ENCODE measurements at regions of chr9 and their contacts with region 1.

Region 1: GRCh38 chr9:127734747-127735529 is at the start of gene TOR2A:
- DNase-seq: peak; percentile 98 to 100 (median 99)
- ATAC-seq: peak; percentile 94
- H3K4me3 ChIP-seq: peak within 1 kb of the TSS; percentile 67 to 79
- H3K4me3 Mint-ChIP-seq: peak within 1 kb of the TSS; percentile 91
- H3K27ac ChIP-seq: peak within 1 kb of the TSS; percentile 59 to 87
- H3K27ac Mint-ChIP-seq: peak within 1 kb of the TSS; percentile 86
- H3K4me1 ChIP-seq: peaks cover 18% of the 10 kb centered on the region
- H3K4me1 Mint-ChIP-seq: peaks cover 7% of the 10 kb centered on the region
- H3K27me3 ChIP-seq: no peaks in the 10 kb centered on the region
- H3K27me3 Mint-ChIP-seq: no peaks in the 10 kb centered on the region
- CTCF ChIP-seq: peak; percentile 80
- total RNA-seq, gene TOR2A: 4.7 to 5.3 TPM

Region 2: DNA sequence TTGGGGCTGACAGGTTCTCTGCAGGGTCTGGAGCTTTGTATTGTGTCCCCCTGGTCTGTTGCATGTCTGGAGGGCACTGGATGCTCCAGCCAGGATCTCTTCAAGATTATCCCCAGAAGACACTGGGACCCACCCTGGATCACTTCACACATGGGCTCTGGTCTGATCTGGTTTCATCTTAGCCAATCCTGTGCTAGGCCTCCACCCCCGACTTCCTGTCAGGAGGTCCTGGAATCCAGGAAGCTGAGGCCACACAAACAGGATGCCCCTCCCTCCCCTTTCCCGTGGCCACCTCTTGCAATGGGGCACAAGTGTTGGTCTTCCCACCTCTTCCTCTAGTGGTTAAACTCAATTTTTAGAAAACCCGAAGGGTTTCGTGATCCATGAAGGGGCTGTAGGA is 1650.9 kb before region 1 on chr9:
- CTCF ChIA-PET with region 1: no interaction called
- POLR2A ChIA-PET with region 1: no interaction called
- intact Hi-C with region 1: no loop called
- DNase-seq: no peak
- ATAC-seq: no peak
- H3K4me3 ChIP-seq: no peak overlapping the region
- H3K4me3 Mint-ChIP-seq: no peak overlapping the region
- H3K27ac ChIP-seq: no peak overlapping the region
- H3K27ac Mint-ChIP-seq: no peak overlapping the region
- H3K4me1 ChIP-seq: peaks cover 6% of the 10 kb centered on the region
- H3K4me1 Mint-ChIP-seq: peaks cover 13% of the 10 kb centered on the region
- H3K27me3 ChIP-seq: peaks cover 0 to 2% of the 10 kb centered on the region in 2 experiments
- H3K27me3 Mint-ChIP-seq: peaks cover 14% of the 10 kb centered on the region
- CTCF ChIP-seq: no peak

Region 3: DNA sequence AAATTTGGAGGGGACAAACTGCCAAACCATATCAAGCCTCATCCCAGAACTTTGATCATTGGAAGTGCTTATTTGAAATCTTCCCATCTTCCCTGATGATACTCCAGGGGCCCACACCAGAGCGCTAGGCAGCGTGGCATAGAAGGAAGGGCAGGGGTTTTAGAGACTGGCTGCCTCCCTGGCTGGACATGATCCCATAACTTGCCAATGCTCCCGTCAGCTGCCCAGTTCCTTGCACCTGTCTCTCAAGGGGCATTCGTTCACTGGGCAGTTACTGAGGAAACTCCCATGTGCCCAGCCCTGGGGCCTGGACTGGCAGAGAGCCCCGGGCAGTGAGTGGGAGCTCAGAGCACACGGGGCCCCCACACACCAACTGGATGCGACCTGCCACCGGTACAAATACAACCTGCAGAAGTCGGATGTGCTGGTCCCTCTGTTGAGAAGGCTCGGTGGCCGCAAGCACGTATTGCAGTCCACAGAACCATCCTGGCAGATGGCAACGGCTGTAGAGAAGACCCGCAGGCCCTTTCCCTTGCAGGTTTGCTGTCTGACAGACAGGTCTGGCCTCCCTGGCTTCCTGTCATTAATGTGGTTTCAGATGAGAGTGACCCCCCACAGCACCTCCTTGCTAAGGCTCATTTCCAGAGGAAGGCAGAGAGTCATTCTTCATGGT is 1285.9 kb before region 1 on chr9:
- CTCF ChIA-PET with region 1: no interaction called
- POLR2A ChIA-PET with region 1: no interaction called
- intact Hi-C with region 1: no loop called
- DNase-seq: no peak
- ATAC-seq: no peak
- H3K4me3 ChIP-seq: no peak overlapping the region
- H3K4me3 Mint-ChIP-seq: no peak overlapping the region
- H3K27ac ChIP-seq: no peak overlapping the region
- H3K27ac Mint-ChIP-seq: no peak overlapping the region
- H3K4me1 ChIP-seq: peaks cover 6% of the 10 kb centered on the region
- H3K4me1 Mint-ChIP-seq: peaks cover 31% of the 10 kb centered on the region
- H3K27me3 ChIP-seq: no peaks in the 10 kb centered on the region
- H3K27me3 Mint-ChIP-seq: no peaks in the 10 kb centered on the region
- CTCF ChIP-seq: no peak

Region 4: DNA sequence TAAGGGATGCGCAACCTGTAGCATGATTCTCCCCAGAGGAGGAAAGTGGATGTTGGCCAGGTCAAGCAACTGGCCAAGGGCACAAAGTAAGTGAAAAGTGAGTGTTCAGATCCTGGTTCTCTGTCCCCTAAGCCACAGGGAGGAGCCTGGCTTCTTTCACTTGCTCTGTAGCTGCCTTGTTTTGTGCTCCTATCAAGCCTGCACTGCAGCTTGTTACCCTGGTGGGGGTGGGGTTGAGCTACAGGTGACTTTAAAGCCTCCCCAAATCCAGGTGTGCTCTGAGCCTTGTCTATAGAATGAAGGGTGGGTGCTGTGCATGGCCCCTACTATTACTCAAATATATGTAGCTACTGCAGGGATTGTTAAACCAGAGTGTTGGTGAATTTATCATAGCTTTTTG is 787.4 kb before region 1 on chr9:
- CTCF ChIA-PET with region 1: no interaction called
- POLR2A ChIA-PET with region 1: no interaction called
- intact Hi-C with region 1: loop called in 1 of 2 experiments (anchors 10 kb)
- DNase-seq: peak in 2 of 9 experiments; percentile 17 to 36
- ATAC-seq: peak; percentile 26
- H3K4me3 ChIP-seq: no peak overlapping the region
- H3K4me3 Mint-ChIP-seq: no peak overlapping the region
- H3K27ac ChIP-seq: no peak overlapping the region
- H3K27ac Mint-ChIP-seq: no peak overlapping the region
- H3K4me1 ChIP-seq: no peaks in the 10 kb centered on the region
- H3K4me1 Mint-ChIP-seq: no peaks in the 10 kb centered on the region
- H3K27me3 ChIP-seq: no peaks in the 10 kb centered on the region
- H3K27me3 Mint-ChIP-seq: peaks cover 7% of the 10 kb centered on the region
- CTCF ChIP-seq: no peak

Region 5: GRCh38 chr9:127122176-127123063 is 612.5 kb before region 1 on chr9 and contains the start of gene ANGPTL2:
- CTCF ChIA-PET with region 1: no interaction called
- POLR2A ChIA-PET with region 1: no interaction called
- intact Hi-C with region 1: no loop called
- DNase-seq: peak in 1 of 9 experiments; percentile 14
- ATAC-seq: peak; percentile 34
- H3K4me3 ChIP-seq: no peak within 1 kb of the TSS
- H3K4me3 Mint-ChIP-seq: no peak within 1 kb of the TSS
- H3K27ac ChIP-seq: no peak within 1 kb of the TSS
- H3K27ac Mint-ChIP-seq: peak within 1 kb of the TSS; percentile 32
- H3K4me1 ChIP-seq: peaks cover 10% of the 10 kb centered on the region
- H3K4me1 Mint-ChIP-seq: peaks cover 9% of the 10 kb centered on the region
- H3K27me3 ChIP-seq: peaks cover 5 to 6% of the 10 kb centered on the region in 2 experiments
- H3K27me3 Mint-ChIP-seq: peaks cover 37% of the 10 kb centered on the region
- CTCF ChIP-seq: no peak
- total RNA-seq, gene ANGPTL2: not detected

Region 6: DNA sequence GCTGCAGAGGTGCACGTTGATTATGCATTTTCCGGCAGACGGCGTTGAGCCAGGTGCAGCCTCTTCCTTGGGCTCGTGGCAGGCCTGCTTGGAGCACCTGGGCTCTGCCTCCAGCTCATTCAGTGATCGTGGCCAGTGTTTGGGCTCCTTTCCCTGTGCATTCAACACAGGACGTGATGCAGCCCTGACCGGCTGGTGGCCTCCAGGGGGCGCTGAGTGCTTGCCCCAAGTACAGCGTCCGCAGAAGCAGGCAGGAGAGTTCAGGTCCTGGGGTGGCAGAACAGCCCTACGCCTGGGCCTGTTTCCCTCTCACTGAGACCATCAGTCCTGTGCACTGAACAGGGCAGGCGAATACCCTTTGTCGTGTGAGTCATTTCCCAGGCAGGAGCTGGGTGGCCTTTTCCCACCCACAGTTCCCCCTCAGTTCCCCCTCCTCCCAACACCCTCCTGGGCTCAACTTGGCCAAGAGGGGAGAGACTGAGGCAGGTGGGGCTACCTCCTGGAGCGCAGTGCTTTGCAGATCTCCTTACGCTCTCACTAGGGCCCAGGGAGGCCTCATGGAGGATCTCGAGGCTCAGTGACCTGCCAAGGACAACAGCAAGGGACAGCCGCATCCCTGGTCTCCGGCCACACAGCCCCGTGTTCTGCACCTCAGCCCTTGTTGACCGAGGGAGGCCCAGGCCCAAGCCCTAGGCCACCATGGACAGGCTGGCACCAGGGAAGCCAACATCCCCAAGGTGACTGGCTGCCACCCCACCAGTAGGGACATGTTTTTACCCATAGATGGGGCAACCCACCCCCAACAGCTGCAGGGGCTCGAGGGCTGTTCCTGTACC is 230.8 kb before region 1 on chr9:
- CTCF ChIA-PET with region 1: interaction called, 18 read pairs
- POLR2A ChIA-PET with region 1: no interaction called
- intact Hi-C with region 1: loop called (anchors 1 kb)
- DNase-seq: peak; percentile 57 to 89 (median 82)
- ATAC-seq: peak; percentile 93
- H3K4me3 ChIP-seq: no peak overlapping the region
- H3K4me3 Mint-ChIP-seq: no peak overlapping the region
- H3K27ac ChIP-seq: no peak overlapping the region
- H3K27ac Mint-ChIP-seq: no peak overlapping the region
- H3K4me1 ChIP-seq: no peaks in the 10 kb centered on the region
- H3K4me1 Mint-ChIP-seq: no peaks in the 10 kb centered on the region
- H3K27me3 ChIP-seq: no peaks in the 10 kb centered on the region
- H3K27me3 Mint-ChIP-seq: no peaks in the 10 kb centered on the region
- CTCF ChIP-seq: peak; percentile 66

Region 7: GRCh38 chr9:127707726-127708147 is 27.2 kb before region 1 on chr9:
- CTCF ChIA-PET with region 1: interaction called, 42 read pairs
- POLR2A ChIA-PET with region 1: interaction called, 4 read pairs
- intact Hi-C with region 1: no loop called
- DNase-seq: peak in 8 of 9 experiments; percentile 23 to 79 (median 56)
- ATAC-seq: peak; percentile 93
- H3K4me3 ChIP-seq: no peak overlapping the region
- H3K4me3 Mint-ChIP-seq: no peak overlapping the region
- H3K27ac ChIP-seq: no peak overlapping the region
- H3K27ac Mint-ChIP-seq: no peak overlapping the region
- H3K4me1 ChIP-seq: peaks cover 17% of the 10 kb centered on the region
- H3K4me1 Mint-ChIP-seq: peaks cover 27% of the 10 kb centered on the region
- H3K27me3 ChIP-seq: no peaks in the 10 kb centered on the region
- H3K27me3 Mint-ChIP-seq: no peaks in the 10 kb centered on the region
- CTCF ChIP-seq: peak; percentile 19

Region 8: GRCh38 chr9:127785023-127785932 is 50.3 kb after region 1 on chr9:
- CTCF ChIA-PET with region 1: interaction called, 55 read pairs
- POLR2A ChIA-PET with region 1: interaction called, 25 read pairs
- intact Hi-C with region 1: loop called (anchors 1 kb)
- DNase-seq: peak; percentile 85 to 97 (median 91)
- ATAC-seq: peak; percentile 53
- H3K4me3 ChIP-seq: peak overlapping the region; percentile 49 to 82
- H3K4me3 Mint-ChIP-seq: peak overlapping the region; percentile 89
- H3K27ac ChIP-seq: peak overlapping the region; percentile 73 to 94
- H3K27ac Mint-ChIP-seq: peak overlapping the region; percentile 96
- H3K4me1 ChIP-seq: peaks cover 66% of the 10 kb centered on the region
- H3K4me1 Mint-ChIP-seq: peaks cover 60% of the 10 kb centered on the region
- H3K27me3 ChIP-seq: no peaks in the 10 kb centered on the region
- H3K27me3 Mint-ChIP-seq: no peaks in the 10 kb centered on the region
- CTCF ChIP-seq: peak; percentile 74

Region 9: DNA sequence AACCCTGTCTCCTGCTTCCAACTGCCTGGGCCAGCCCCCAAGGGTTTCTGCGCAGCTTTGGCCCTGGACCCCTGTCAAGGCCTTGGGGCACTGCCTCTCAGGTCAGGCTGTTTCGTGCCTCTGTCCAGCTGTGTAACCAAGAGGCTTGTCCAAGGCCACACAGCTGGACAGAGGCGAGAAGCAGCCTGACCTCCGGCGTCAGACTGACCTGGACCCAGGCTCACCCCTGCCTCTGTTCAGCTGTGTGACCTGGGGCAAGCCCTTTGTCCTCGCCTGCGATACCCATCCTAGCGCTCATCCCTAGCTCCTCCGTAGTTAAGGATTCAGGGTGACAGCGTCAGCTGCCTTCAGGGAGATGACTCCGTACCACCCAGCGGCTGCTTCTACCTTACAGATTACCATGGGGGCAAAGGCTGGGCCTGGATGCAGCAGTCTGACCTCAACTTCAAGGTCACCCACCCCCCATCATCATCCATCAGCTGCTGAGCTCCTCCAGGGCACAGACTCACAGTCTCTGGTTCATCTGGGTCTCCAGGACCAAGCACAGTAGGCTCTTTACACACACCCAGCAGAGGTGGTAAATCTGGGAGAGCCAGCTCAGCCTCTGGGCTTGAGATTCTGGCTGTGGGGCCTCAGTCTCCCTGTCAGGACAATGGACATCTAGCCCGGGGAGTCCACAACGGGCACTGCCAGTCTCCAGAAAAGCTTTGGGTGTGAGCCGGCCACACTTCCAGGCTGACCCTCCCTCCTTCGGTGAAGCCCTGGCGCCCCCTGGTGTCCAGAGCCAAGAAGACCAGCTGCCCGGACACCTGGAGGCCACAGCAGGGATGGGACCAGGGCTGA is 134.6 kb after region 1 on chr9:
- CTCF ChIA-PET with region 1: interaction called, 46 read pairs
- POLR2A ChIA-PET with region 1: interaction called, 10 read pairs
- intact Hi-C with region 1: loop called (anchors 1 kb)
- DNase-seq: peak; percentile 51 to 89 (median 81)
- ATAC-seq: peak; percentile 71
- H3K4me3 ChIP-seq: no peak overlapping the region
- H3K4me3 Mint-ChIP-seq: no peak overlapping the region
- H3K27ac ChIP-seq: no peak overlapping the region
- H3K27ac Mint-ChIP-seq: no peak overlapping the region
- H3K4me1 ChIP-seq: peaks cover 17% of the 10 kb centered on the region
- H3K4me1 Mint-ChIP-seq: peaks cover 17% of the 10 kb centered on the region
- H3K27me3 ChIP-seq: no peaks in the 10 kb centered on the region
- H3K27me3 Mint-ChIP-seq: no peaks in the 10 kb centered on the region
- CTCF ChIP-seq: peak; percentile 74